Naive thymus-derived CD8-positive, alpha-beta T cell (primary cell): ENCODE measurements at regions of chr1 and their contacts with region 1.

Region 1: DNA sequence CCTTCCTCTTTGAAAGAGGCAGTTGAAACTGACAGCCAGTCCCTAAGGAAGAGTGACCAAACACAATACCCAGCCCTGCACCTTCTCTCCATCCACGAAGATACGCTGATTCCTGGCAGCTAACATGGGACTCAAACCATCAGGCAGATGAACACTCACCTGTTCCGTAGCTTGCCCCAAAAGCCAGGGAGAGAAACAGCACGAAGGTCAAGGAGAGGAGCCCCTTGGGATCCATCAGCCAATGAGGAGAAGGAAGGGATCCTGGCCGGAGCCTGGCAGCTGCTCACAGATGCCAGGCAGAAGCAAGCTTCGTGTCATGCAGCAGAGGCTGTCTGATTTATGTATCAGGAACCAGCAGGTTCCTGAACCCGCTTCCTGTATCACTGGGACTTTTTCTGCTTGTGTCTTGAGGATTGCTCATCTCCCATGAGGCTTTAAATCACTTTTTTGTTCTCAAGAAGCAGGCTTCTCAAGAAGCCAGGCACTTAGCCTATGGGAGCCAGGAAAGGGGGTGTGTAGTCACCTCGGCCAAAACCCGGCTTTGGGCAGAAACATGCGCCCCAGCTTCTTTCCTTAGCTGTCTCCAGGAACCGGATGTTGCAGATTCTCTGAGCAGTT is at the start of gene SLAMF1:
- DNase-seq: peak in 5 of 10 donors; percentile 13 to 56 (median 37)
- ATAC-seq: peak; percentile 77 to 85
- H3K4me3 Mint-ChIP-seq: peak within 1 kb of the TSS; percentile 80 to 97 (median 89)
- H3K27ac Mint-ChIP-seq: peak within 1 kb of the TSS; percentile 89 to 96 (median 93)
- H3K4me1 Mint-ChIP-seq: peaks cover 39 to 91% (median 83%) of the 10 kb centered on the region in 4 donors
- H3K27me3 Mint-ChIP-seq: no peaks in the 10 kb centered on the region
- polyA plus RNA-seq, gene SLAMF1: 1.7 to 3.9 (median 3.7) TPM

Region 2: DNA sequence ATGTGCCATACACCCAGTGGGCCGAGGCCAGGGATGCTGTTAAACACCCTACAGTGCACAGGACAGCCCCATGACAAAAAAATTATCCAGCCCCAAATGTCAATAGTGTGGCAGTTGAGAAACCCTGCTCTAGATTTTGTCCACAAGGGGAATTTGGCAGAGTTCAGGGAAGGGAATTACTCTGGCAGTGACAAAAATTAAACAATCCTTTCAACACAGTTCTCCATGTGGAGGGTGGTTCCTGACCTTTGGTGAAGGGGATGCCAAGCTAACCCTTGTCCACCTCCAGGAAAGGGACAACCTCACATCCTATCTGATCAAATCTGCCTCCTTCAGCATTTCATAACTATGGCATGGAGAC is 39.2 kb before region 1 on chr1:
- POLR2A ChIA-PET with region 1: no interaction called
- DNase-seq: no peak
- ATAC-seq: no peak
- H3K4me3 Mint-ChIP-seq: no peak overlapping the region
- H3K27ac Mint-ChIP-seq: peak overlapping the region in 4 of 10 donors; percentile 46 to 94 (median 80)
- H3K4me1 Mint-ChIP-seq: peaks cover 9 to 31% (median 26%) of the 10 kb centered on the region in 4 donors
- H3K27me3 Mint-ChIP-seq: no peaks in the 10 kb centered on the region

Region 3: GRCh38 chr1:160618763-160619274 is 28.0 kb before region 1 on chr1:
- POLR2A ChIA-PET with region 1: interaction called, 13 read pairs
- DNase-seq: peak in 7 of 10 donors; percentile 25 to 65 (median 39)
- ATAC-seq: peak; percentile 58 to 63
- H3K4me3 Mint-ChIP-seq: no peak overlapping the region
- H3K27ac Mint-ChIP-seq: peak overlapping the region in 8 of 10 donors; percentile 17 to 68 (median 43)
- H3K4me1 Mint-ChIP-seq: peaks cover 27 to 67% (median 45%) of the 10 kb centered on the region in 4 donors
- H3K27me3 Mint-ChIP-seq: no peaks in the 10 kb centered on the region

Region 4: DNA sequence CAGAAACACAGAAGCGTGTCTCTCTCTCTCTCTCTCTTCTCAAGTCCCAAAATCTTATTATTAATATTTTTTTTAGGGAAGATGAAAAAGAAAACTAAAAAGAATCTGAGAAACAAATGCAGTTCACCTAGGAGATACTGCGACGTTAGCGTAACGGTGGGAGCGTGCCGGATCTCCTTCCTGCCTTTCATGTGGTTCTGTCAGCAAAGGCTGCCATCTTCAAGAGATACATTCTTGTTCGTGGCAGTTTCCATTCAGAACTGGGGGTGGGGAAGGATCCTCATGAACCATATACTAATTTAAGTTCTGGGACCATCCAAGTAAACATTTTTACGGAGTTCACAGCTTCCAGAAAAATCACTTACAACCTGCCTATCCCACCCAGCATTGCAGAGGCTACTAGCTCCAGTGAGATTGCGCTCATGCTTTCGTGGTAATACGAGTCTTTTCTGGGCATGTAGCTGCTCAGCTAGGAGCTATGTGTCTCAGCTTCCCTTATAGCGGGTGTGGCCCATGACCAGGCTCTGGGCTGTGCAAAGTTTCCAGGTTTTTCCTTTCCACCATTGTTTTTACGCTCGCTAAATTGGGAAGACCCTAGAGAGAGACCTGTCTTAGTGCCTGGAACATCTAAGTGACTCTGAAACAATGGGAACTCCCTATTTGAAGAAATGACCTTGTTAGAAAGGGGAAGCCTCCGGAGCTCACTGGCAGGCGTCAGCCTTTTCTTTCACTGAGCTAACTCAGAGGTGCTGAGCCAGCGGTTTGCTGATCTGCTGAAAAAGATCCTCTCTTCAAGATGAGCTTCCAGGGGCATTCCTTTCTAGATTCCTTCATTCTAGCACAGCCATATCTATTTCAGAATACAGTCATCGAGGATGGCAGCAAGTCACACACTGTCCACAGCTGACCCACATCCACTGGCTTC is 17.3 kb before region 1 on chr1:
- POLR2A ChIA-PET with region 1: interaction called, 39 read pairs
- DNase-seq: peak; percentile 53 to 92 (median 84)
- ATAC-seq: peak; percentile 80 to 90
- H3K4me3 Mint-ChIP-seq: peak overlapping the region; percentile 72 to 90 (median 84)
- H3K27ac Mint-ChIP-seq: peak overlapping the region; percentile 94 to 100 (median 99)
- H3K4me1 Mint-ChIP-seq: peaks cover 57 to 100% (median 96%) of the 10 kb centered on the region in 4 donors
- H3K27me3 Mint-ChIP-seq: no peaks in the 10 kb centered on the region

Region 5: DNA sequence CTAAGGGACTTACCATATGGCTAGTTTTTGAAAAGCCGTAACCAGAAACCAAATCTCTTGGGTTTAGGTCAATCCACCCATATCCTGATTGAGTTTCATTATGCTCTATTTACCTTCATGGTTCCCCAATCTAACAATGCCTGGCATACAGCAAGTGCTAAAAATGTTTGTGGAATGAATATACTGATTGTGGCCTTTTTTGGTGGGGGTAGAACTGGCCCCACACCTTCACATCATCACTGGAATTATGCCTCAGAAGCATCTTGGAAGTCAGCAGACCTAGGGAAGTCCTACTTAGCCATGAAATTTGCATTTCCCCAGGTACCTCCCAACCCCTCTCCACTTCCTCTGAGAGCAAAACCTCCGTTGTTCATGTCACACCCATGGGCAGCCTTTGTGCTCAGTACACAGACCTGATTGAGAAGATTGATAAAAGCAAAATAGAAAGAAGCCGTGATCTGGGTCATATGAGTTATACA is 17.8 kb after region 1 on chr1:
- POLR2A ChIA-PET with region 1: interaction called, 18 read pairs
- DNase-seq: peak in 2 of 10 donors; percentile 40 to 44
- ATAC-seq: peak; percentile 83 to 87
- H3K4me3 Mint-ChIP-seq: peak overlapping the region; percentile 23 to 77 (median 65)
- H3K27ac Mint-ChIP-seq: peak overlapping the region; percentile 1 to 91 (median 72)
- H3K4me1 Mint-ChIP-seq: peaks cover 34 to 63% (median 55%) of the 10 kb centered on the region in 4 donors
- H3K27me3 Mint-ChIP-seq: no peaks in the 10 kb centered on the region

Region 6: DNA sequence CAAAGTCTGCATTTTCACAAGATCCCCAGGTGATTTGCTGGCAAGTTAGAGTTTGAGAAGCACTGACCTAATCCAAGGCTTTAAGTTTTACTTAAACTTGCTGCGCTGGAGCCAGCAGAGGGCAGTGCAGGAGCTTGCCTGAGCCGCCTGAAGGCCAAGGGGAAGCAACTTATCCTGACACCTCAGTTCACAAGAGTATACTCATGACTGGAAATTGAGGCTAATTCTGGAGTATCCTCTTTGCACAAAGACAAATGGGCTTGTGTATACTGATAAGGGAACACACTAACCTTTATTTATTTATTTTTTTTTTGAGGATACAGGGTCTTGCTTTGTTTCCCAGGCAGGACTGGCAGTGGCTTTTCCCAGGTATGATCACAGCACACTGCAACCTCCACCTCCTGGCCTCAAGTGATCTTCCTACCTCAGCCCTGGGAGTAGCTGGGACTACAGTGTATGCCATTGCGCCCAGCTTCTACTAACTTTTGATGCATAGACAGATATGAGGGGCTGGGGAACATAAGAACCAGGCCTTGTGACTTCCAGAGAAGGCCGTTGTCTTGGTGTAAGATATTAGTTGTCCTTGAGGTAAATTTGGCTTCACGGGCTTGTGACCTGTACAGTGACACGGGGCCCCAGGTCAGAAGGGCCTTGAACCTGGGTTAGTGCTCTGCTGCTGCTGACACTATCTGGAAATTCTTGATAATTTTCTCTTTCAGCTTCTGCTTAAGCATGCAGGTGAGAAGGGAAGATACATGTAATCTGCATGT is 29.0 kb after region 1 on chr1:
- POLR2A ChIA-PET with region 1: interaction called, 10 read pairs
- DNase-seq: peak; percentile 50 to 84 (median 66)
- ATAC-seq: peak; percentile 79 to 82
- H3K4me3 Mint-ChIP-seq: peak overlapping the region in 5 of 10 donors; percentile 6 to 43 (median 27)
- H3K27ac Mint-ChIP-seq: peak overlapping the region in 7 of 10 donors; percentile 29 to 95 (median 87)
- H3K4me1 Mint-ChIP-seq: peaks cover 9 to 16% (median 11%) of the 10 kb centered on the region in 4 donors
- H3K27me3 Mint-ChIP-seq: no peaks in the 10 kb centered on the region

Region 7: GRCh38 chr1:160777486-160778089 is 130.8 kb after region 1 on chr1:
- POLR2A ChIA-PET with region 1: no interaction called
- DNase-seq: peak in 8 of 10 donors; percentile 26 to 75 (median 61)
- ATAC-seq: peak; percentile 77 to 80
- H3K4me3 Mint-ChIP-seq: no peak overlapping the region
- H3K27ac Mint-ChIP-seq: peak overlapping the region in 4 of 10 donors; percentile 13 to 62 (median 31)
- H3K4me1 Mint-ChIP-seq: peaks cover 10 to 43% (median 15%) of the 10 kb centered on the region in 4 donors
- H3K27me3 Mint-ChIP-seq: no peaks in the 10 kb centered on the region